ENCODE measurements at regions of chr19 and their contacts with region 1.

Region 1: DNA sequence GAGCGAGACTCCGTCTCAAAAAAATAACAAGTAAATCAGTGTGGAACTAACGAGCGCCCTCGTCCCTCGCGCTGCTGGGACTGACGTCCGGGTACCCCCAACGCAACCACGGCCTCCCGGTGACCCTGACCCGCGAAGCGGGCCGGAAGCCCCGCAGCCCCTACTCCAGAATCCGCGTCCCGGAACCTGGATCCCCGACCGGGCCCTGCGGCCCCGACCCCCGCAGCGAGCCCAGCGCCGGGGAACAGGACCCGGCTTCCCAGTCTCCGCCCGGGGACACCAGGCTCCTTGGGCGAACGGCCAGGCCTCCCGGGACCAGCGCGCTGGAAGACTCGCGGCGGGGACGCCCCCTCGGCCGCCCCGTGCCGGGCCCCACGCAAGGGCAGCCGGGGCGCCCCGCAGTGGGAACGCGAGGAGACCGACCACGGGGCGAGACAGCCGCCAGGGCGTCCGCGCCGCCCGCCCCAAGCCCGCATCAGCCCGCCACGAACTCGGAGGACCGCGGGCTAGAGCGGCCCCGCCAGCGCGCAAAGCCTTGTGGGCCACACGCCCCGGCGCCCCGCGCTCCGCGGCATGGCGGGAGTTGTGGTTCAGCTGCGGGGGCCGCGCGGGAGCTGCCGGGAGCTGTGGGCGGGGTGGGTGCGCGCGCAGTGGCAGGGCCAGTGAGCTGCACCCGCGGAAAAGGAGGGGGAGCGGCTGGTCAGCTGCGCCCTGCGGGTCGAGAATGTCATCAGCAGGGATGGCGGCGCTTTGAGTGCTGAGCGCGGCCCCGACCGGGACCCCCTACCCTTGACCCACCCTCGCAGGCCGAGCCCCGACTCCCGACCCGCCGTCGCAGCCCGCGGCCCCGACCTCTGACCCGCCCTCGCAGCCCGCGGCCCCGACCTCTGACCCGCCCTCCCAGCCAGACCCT is 7.5 kb upstream of the MADCAM1 start:
- DNase-seq: peak; percentile 85 to 96 (median 93)
- ATAC-seq: peak; percentile 93
- H3K4me3 ChIP-seq: peak overlapping the region; percentile 55 to 84
- H3K4me3 Mint-ChIP-seq: peak overlapping the region; percentile 83
- H3K27ac ChIP-seq: peak overlapping the region; percentile 74 to 80
- H3K27ac Mint-ChIP-seq: peak overlapping the region; percentile 85
- H3K4me1 ChIP-seq: peaks cover 6% of the 10 kb centered on the region
- H3K4me1 Mint-ChIP-seq: peaks cover 11% of the 10 kb centered on the region
- H3K27me3 ChIP-seq: no peaks in the 10 kb centered on the region
- H3K27me3 Mint-ChIP-seq: peaks cover 8% of the 10 kb centered on the region
- CTCF ChIP-seq: no peak

Region 2: GRCh38 chr19:344625-345319 is 144.0 kb before region 1 on chr19 and contains the start of gene MIER2:
- CTCF ChIA-PET with region 1: no interaction called
- POLR2A ChIA-PET with region 1: no interaction called
- intact Hi-C with region 1: loop called in 1 of 2 experiments (anchors 10 kb)
- DNase-seq: peak; percentile 77 to 97 (median 89)
- ATAC-seq: peak; percentile 94
- H3K4me3 ChIP-seq: peak within 1 kb of the TSS; percentile 66 to 69
- H3K4me3 Mint-ChIP-seq: peak within 1 kb of the TSS; percentile 85
- H3K27ac ChIP-seq: peak within 1 kb of the TSS; percentile 8 to 49
- H3K27ac Mint-ChIP-seq: peak within 1 kb of the TSS; percentile 76
- H3K4me1 ChIP-seq: peaks cover 30% of the 10 kb centered on the region
- H3K4me1 Mint-ChIP-seq: peaks cover 49% of the 10 kb centered on the region
- H3K27me3 ChIP-seq: no peaks in the 10 kb centered on the region
- H3K27me3 Mint-ChIP-seq: peaks cover 3% of the 10 kb centered on the region
- CTCF ChIP-seq: no peak
- total RNA-seq, gene MIER2: 10.5 to 11.0 TPM

Region 3: DNA sequence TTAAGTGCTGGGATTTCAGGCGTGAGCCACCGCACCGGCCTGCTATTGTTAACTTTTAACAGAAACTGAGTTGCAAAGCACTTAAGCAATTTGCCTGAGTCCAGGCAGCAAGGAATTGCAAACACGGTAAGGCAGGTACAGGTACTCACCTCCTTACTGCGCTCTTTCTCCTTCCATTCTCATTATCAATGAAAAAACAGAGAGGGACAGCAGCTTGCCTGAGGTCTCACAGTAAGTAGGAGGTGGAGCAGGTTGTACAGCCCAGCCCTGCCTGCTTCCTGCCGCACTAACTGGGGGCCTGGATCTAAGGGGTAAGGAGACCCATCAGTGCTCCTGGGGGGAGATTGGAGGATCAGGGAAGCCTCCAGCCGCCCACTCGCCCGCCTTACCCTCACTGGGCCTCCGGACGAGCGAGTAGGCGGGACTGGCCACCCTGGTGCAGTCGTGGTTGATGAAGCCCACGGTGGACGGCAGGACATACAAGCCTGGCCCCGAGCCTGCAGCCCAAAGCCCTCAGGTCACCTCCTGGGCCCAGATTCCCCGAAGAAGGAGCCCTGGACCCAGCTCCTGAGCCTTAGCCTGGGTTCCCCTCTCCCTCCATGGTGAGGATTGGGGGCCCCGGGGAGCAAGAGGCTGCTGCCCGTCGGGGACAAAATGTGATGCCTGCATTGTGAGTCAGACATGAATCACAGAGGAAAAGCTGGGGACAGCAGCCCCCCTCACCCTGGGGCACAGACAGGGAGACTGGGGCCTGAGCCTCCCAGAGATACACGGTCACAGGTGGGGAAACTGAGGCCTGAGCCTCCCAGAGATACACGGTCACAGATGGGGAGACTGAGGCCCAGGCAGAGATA is 16.5 kb before region 1 on chr19:
- CTCF ChIA-PET with region 1: no interaction called
- POLR2A ChIA-PET with region 1: no interaction called
- intact Hi-C with region 1: no loop called
- DNase-seq: no peak
- ATAC-seq: no peak
- H3K4me3 ChIP-seq: no peak overlapping the region
- H3K4me3 Mint-ChIP-seq: no peak overlapping the region
- H3K27ac ChIP-seq: no peak overlapping the region
- H3K27ac Mint-ChIP-seq: no peak overlapping the region
- H3K4me1 ChIP-seq: no peaks in the 10 kb centered on the region
- H3K4me1 Mint-ChIP-seq: no peaks in the 10 kb centered on the region
- H3K27me3 ChIP-seq: no peaks in the 10 kb centered on the region
- H3K27me3 Mint-ChIP-seq: peaks cover 5% of the 10 kb centered on the region
- CTCF ChIP-seq: no peak

Region 4: GRCh38 chr19:518603-519231 is 30.0 kb after region 1 on chr19:
- CTCF ChIA-PET with region 1: no interaction called
- POLR2A ChIA-PET with region 1: no interaction called
- intact Hi-C with region 1: no loop called
- DNase-seq: peak; percentile 46 to 83 (median 78)
- ATAC-seq: peak; percentile 98
- H3K4me3 ChIP-seq: no peak overlapping the region
- H3K4me3 Mint-ChIP-seq: peak overlapping the region; percentile 29
- H3K27ac ChIP-seq: no peak overlapping the region
- H3K27ac Mint-ChIP-seq: no peak overlapping the region
- H3K4me1 ChIP-seq: peaks cover 11% of the 10 kb centered on the region
- H3K4me1 Mint-ChIP-seq: peaks cover 13% of the 10 kb centered on the region
- H3K27me3 ChIP-seq: no peaks in the 10 kb centered on the region
- H3K27me3 Mint-ChIP-seq: no peaks in the 10 kb centered on the region
- CTCF ChIP-seq: peak; percentile 46

Region 5: GRCh38 chr19:558770-559439 is 70.1 kb after region 1 on chr19:
- CTCF ChIA-PET with region 1: no interaction called
- POLR2A ChIA-PET with region 1: no interaction called
- intact Hi-C with region 1: no loop called
- DNase-seq: no peak
- ATAC-seq: no peak
- H3K4me3 ChIP-seq: no peak overlapping the region
- H3K4me3 Mint-ChIP-seq: no peak overlapping the region
- H3K27ac ChIP-seq: no peak overlapping the region
- H3K27ac Mint-ChIP-seq: no peak overlapping the region
- H3K4me1 ChIP-seq: no peaks in the 10 kb centered on the region
- H3K4me1 Mint-ChIP-seq: no peaks in the 10 kb centered on the region
- H3K27me3 ChIP-seq: no peaks in the 10 kb centered on the region
- H3K27me3 Mint-ChIP-seq: no peaks in the 10 kb centered on the region
- CTCF ChIP-seq: no peak

Measured in CD8-positive, alpha-beta T cell (primary cell).